ENCODE measurements at regions of chr11 and their contacts with region 1.

Region 1: GRCh38 chr11:70067591-70068341 is 10.4 kb upstream of the ANO1 start:
- DNase-seq: peak in 1 of 2 donors; percentile 73
- H3K4me3 ChIP-seq: peak overlapping the region in 1 of 3 donors; percentile 29
- H3K27ac ChIP-seq: peak overlapping the region; percentile 83 to 92
- H3K4me1 ChIP-seq: peaks cover 0 to 17% of the 10 kb centered on the region in 2 donors
- H3K27me3 ChIP-seq: no peaks in the 10 kb centered on the region
- CTCF ChIP-seq: peak in 1 of 3 donors; percentile 43
- POLR2A ChIP-seq: no peak

Region 2: DNA sequence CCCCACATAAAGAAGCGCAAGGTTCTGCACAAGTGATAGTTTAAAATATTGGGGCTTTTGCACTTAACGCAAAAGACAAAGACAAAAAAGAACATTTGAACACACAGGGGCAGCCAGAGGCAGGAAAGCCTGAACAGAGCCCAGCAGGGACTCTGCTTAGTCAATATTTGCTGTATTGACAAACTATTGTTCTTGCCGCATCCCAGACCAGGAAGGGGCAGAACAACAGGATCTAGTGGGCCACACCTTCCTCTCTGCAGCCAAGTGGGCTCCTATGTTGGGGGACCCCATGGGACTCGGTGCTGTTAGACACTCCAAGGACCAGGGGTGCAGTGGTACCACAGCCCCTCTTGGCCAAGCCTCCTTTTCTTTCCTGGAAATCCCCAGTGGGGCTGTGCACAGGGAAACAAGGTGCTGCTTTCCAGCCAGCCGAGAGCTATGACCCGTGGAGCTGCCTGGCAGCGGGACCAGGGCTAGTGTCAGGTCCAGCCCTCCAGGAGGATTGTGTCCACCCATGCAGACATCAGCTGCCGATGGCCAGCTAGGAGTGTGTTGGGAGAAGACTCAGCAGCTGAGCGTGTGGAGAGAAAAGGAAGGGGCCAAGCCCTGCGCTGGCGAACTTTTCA is 32.9 kb before region 1 on chr11:
- intact Hi-C with region 1: loop called (anchors 2 kb)
- DNase-seq: no peak
- H3K4me3 ChIP-seq: no peak overlapping the region
- H3K27ac ChIP-seq: no peak overlapping the region
- H3K4me1 ChIP-seq: no peaks in the 10 kb centered on the region
- H3K27me3 ChIP-seq: no peaks in the 10 kb centered on the region
- CTCF ChIP-seq: no peak
- POLR2A ChIP-seq: no peak

Region 3: GRCh38 chr11:70048279-70049027 is 19.3 kb before region 1 on chr11:
- intact Hi-C with region 1: no loop called
- DNase-seq: peak; percentile 84 to 91
- H3K4me3 ChIP-seq: no peak overlapping the region
- H3K27ac ChIP-seq: peak overlapping the region; percentile 79 to 81
- H3K4me1 ChIP-seq: peaks cover 0 to 4% of the 10 kb centered on the region in 2 donors
- H3K27me3 ChIP-seq: no peaks in the 10 kb centered on the region
- CTCF ChIP-seq: peak; percentile 26 to 54 (median 32)
- POLR2A ChIP-seq: no peak